HAP-1 (cell line): ENCODE measurements at regions of chr2 and their contacts with region 1.

Region 1: DNA sequence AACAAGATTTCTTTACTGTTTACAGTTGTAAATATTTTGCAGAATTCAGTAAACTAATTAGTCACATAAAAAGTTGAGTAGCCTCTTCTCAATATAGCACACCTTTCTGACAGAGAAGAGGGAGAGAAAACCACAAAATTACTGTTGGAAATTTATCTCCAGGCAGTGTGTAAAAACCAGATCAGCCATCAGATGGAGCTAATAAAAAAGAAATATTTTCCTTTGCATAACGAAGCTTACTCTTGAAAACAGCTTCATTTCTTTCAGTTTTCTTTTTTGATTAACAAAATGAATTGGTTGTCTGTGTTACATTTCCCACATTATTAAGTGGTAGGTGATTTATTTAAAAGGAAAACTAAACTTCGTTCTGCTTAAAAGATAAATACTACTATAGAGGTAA is 259.3 kb upstream of the KCNJ3 start:
- DNase-seq: peak in 1 of 2 experiments; percentile 14
- H3K4me3 ChIP-seq: no peak overlapping the region
- H3K4me1 ChIP-seq: no peaks in the 10 kb centered on the region
- H3K27me3 ChIP-seq: no peaks in the 10 kb centered on the region

Region 2: GRCh38 chr2:155033652-155034051 is 594.5 kb after region 1 on chr2:
- in situ Hi-C with region 1: no loop called
- DNase-seq: no peak
- H3K4me3 ChIP-seq: no peak overlapping the region
- H3K4me1 ChIP-seq: no peaks in the 10 kb centered on the region
- H3K27me3 ChIP-seq: no peaks in the 10 kb centered on the region

Region 3: DNA sequence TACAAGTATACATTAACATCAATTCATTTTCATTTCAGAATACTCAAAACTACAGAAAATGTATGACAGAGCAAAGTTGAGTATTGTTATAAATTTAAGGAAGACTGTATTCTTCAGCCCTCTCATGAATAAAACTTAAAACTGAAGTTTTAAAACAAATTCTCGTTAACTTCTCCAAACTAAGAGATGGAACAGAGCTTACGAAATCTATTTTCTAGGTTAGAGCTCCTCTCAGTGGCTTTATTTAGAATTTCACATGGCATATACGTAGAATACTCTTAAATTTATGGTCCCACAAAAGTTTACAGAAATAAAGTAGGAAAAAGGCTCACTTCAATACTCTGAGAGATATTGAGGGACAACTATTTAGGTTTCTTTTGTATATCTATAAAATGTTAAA is 871.4 kb after region 1 on chr2:
- in situ Hi-C with region 1: loop called (anchors 25 kb)
- DNase-seq: peak in 1 of 2 experiments; percentile 59
- H3K4me3 ChIP-seq: no peak overlapping the region
- H3K4me1 ChIP-seq: no peaks in the 10 kb centered on the region
- H3K27me3 ChIP-seq: no peaks in the 10 kb centered on the region